Heart right ventricle (tissue), 16 donors: ENCODE measurements at regions of chr12 and their contacts with region 1.

Region 1: GRCh38 chr12:89451841-89452251 is 72.8 kb downstream of the GALNT4 start:
- DNase-seq: peak; percentile 35 to 38
- ATAC-seq: peak; percentile 53 to 78 (median 72)
- H3K4me3 ChIP-seq: peak overlapping the region in 2 of 10 donors; percentile 0 to 7
- H3K27ac ChIP-seq: peak overlapping the region in 9 of 10 donors; percentile 24 to 85 (median 71)
- H3K4me1 ChIP-seq: peaks cover 0 to 43% (median 41%) of the 10 kb centered on the region in 9 donors
- H3K27me3 ChIP-seq: no peaks in the 10 kb centered on the region
- CTCF ChIP-seq: no peak

Region 2: GRCh38 chr12:89384050-89384758 is 67.6 kb before region 1 on chr12:
- intact Hi-C with region 1: loop called in 2 of 10 experiments (anchors 5 to 10 kb)
- DNase-seq: peak; percentile 28 to 46
- ATAC-seq: peak; percentile 74 to 84 (median 79)
- H3K4me3 ChIP-seq: peak overlapping the region in 2 of 10 donors; percentile 5 to 11
- H3K27ac ChIP-seq: peak overlapping the region; percentile 17 to 82 (median 62)
- H3K4me1 ChIP-seq: peaks cover 2 to 57% (median 38%) of the 10 kb centered on the region in 9 donors
- H3K27me3 ChIP-seq: no peaks in the 10 kb centered on the region
- CTCF ChIP-seq: no peak

Region 3: GRCh38 chr12:89389755-89390661 is 61.8 kb before region 1 on chr12:
- intact Hi-C with region 1: loop called in 3 of 10 experiments (anchors 5 to 10 kb)
- DNase-seq: no peak
- ATAC-seq: peak; percentile 46 to 94 (median 84)
- H3K4me3 ChIP-seq: no peak overlapping the region
- H3K27ac ChIP-seq: peak overlapping the region; percentile 32 to 79 (median 60)
- H3K4me1 ChIP-seq: peaks cover 3 to 62% (median 36%) of the 10 kb centered on the region in 9 donors
- H3K27me3 ChIP-seq: no peaks in the 10 kb centered on the region
- CTCF ChIP-seq: no peak

Region 4: DNA sequence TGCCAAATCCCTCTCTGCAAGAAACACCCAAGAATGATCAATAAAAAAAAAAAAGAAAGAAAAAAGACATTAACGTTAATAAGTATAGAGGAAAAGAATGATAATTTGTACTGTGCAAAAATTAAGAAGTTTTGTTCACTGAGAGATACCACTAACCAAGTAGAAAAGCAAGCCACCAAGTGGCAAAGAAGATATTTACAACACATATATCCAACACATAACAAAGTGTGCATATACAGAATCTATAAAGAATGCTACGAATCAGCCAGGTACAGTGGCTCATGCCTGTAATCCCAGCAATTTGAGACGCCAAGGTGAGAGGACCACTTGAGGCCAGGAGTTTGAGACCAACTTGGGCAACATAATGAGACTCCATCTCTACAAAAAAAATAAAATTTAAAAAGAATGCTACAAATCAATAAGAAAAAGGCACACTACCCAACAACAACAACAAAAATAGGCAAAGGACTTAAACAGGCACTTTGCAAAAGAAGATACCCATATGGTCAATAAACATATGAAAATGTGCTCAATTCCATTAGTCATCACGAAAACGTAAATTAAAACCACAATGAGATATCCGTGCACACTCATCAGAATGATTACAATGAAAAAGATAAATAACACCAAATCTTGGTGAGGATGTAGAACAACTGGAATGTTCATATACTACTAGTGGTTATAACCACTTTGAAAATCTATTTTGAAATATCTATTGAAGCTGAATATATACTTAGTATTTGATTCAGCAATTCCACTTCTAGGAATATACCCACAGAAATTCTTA is 52.9 kb after region 1 on chr12:
- intact Hi-C with region 1: no loop called
- DNase-seq: no peak
- ATAC-seq: no peak
- H3K4me3 ChIP-seq: no peak overlapping the region
- H3K27ac ChIP-seq: no peak overlapping the region
- H3K4me1 ChIP-seq: peaks cover 0 to 20% (median 0%) of the 10 kb centered on the region in 9 donors
- H3K27me3 ChIP-seq: no peaks in the 10 kb centered on the region
- CTCF ChIP-seq: peak in 1 of 9 donors; percentile 5